Cardiac septum (tissue), 1 donor: ENCODE measurements at regions of chr2 and their contacts with region 1.

Region 1: GRCh38 chr2:99180755-99181623 is at the starts of genes MITD1 and MRPL30:
- DNase-seq: peak; percentile 96
- total RNA-seq, gene MITD1: 11.4 TPM
- total RNA-seq, gene MRPL30: 27.8 TPM

Region 2: GRCh38 chr2:98149333-98149697 is 1031.7 kb before region 1 on chr2:
- intact Hi-C with region 1: no loop called
- DNase-seq: peak; percentile 63

Region 3: GRCh38 chr2:99141110-99142108 is 39.6 kb before region 1 on chr2 and contains the start of gene C2orf15:
- intact Hi-C with region 1: loop called (anchors 5 kb)
- DNase-seq: peak; percentile 98
- total RNA-seq, gene C2orf15: not detected

Region 4: DNA sequence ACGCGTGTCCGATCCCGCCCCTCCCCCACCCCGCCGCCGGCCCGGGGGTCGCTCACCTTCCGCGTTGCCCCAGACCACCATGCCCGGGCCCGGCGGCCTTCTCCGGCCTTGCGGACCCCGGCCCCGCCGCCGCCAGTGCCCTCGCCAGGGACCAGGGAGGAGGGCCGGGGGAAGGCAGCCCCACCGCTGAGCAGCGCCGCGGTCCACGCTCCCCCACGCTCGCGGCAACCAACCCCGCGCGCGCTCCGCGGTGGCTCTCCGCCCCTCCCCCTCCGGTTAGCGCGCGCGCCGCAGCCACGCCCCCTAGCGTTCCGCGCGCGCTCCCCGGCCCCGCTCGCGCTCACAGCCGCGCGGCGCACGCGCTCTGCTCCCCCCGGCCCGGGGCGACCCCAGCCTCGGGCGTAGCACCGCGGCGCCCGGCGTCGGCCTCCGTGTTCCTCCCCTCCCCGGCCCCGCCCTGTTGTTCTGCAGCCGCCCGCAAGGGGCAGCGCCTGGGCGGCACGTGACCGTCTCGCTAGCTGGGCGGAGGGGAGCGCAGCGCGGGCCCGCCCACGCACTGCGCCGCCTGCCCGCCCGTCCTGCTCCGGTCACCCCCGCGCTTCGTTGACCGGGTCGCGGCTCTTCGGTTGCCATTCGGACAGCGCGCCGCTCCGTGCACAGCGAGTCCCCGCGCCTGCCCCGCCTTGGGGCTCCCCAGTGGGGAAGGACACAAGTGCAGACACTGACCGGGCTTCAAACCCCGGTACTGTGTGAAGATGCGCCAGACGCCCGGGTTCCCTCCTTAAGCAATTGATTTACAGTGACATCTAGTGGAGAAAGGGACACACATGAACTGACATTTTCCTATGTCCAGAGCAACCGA is 309.0 kb after region 1 on chr2 and contains the start of gene REV1:
- intact Hi-C with region 1: loop called (anchors 2 kb)
- DNase-seq: peak; percentile 96
- total RNA-seq, gene REV1: 34.1 TPM